Activated CD4-positive, alpha-beta memory T cell treated with anti-CD3 and anti-CD28 coated beads, Interleukin-2, amount 10 ng/mL, durations not matched to agents 7 days and 5 days (primary cell): ENCODE measurements at regions of chr16 and their contacts with region 1.

Region 1: GRCh38 chr16:53435066-53435688 is 906 bp downstream of the RBL2 start:
- DNase-seq: peak; percentile 70
- H3K4me3 Mint-ChIP-seq: peak overlapping the region; percentile 97
- H3K27ac Mint-ChIP-seq: peak overlapping the region; percentile 91
- H3K4me1 Mint-ChIP-seq: peaks cover 41% of the 10 kb centered on the region
- H3K27me3 Mint-ChIP-seq: peaks cover 2% of the 10 kb centered on the region

Region 2: DNA sequence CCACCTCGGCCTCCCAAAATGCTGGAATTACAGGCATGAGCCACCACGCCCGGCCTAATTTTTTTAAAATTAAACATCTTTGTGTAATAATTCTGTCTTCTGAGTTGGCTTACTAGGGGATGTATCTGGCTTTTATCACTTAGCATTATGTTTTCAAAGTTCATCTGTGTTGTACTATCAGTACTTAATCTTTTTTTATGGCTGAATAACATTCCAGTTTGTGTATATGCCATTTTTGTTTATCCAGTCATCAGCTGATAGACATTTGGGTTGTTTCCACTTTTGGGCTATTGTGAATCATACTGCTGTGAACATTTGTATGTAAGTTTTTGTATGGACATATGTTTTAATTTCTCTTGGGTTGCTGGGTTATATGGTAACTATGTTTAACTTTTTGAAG is 311.4 kb before region 1 on chr16:
- CTCF ChIA-PET with region 1: no interaction called
- POLR2A ChIA-PET with region 1: no interaction called
- DNase-seq: no peak
- H3K4me3 Mint-ChIP-seq: no peak overlapping the region
- H3K27ac Mint-ChIP-seq: no peak overlapping the region
- H3K4me1 Mint-ChIP-seq: peaks cover 5% of the 10 kb centered on the region
- H3K27me3 Mint-ChIP-seq: no peaks in the 10 kb centered on the region

Region 3: GRCh38 chr16:53449632-53450517 is 14.7 kb after region 1 on chr16:
- CTCF ChIA-PET with region 1: interaction called, 14 read pairs
- POLR2A ChIA-PET with region 1: interaction called, 282 read pairs
- DNase-seq: no peak
- H3K4me3 Mint-ChIP-seq: peak overlapping the region; percentile 50
- H3K27ac Mint-ChIP-seq: peak overlapping the region; percentile 66
- H3K4me1 Mint-ChIP-seq: peaks cover 63% of the 10 kb centered on the region
- H3K27me3 Mint-ChIP-seq: no peaks in the 10 kb centered on the region

Region 4: GRCh38 chr16:53495325-53495724 is 60.1 kb after region 1 on chr16:
- CTCF ChIA-PET with region 1: interaction called, 4 read pairs
- POLR2A ChIA-PET with region 1: interaction called, 125 read pairs
- DNase-seq: no peak
- H3K4me3 Mint-ChIP-seq: no peak overlapping the region
- H3K27ac Mint-ChIP-seq: no peak overlapping the region
- H3K4me1 Mint-ChIP-seq: peaks cover 39% of the 10 kb centered on the region
- H3K27me3 Mint-ChIP-seq: no peaks in the 10 kb centered on the region